Activated T-helper 2 cell treated with anti-CD3 and anti-CD28 coated beads, Interferon-gamma antibody, Interleukin-2, Interleukin-4, amounts not matched to agents 10 μg/mL and 5 μg/mL and 100 μg/mL, durations not matched to agents 14 hours and 24 hours and 36 hours (primary cell): ENCODE measurements at regions of chr12 and their contacts with region 1.

Region 1: GRCh38 chr12:12008931-12009611 is 61.7 kb upstream of the BCL2L14 start:
- DNase-seq: peak; percentile 47
- H3K4me3 Mint-ChIP-seq: peak overlapping the region; percentile 60
- H3K27ac Mint-ChIP-seq: peak overlapping the region; percentile 96
- H3K4me1 Mint-ChIP-seq: peaks cover 77% of the 10 kb centered on the region
- H3K27me3 Mint-ChIP-seq: peaks cover 5% of the 10 kb centered on the region

Region 2: DNA sequence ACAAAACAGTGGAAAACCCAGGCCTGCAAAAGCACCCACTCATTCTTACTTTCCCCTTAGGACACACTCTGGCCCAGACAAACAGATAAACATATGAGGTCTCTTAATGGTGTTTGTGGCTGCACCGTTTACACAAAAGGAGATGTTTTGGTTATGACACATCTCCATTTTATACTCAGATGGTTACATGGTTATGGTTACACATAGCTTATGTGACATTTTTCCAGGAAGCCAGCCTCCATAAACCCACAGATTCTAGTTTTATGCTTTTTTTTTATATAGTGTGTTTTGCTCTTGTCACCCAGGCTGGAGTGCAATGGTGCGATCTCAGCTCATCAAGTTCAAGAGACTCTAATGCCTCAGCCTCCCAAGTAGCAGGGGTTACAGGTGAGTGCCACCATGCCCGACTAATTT is 1704.9 kb before region 1 on chr12:
- intact Hi-C with region 1: loop called (anchors 2 kb)
- DNase-seq: peak; percentile 18
- H3K4me3 Mint-ChIP-seq: no peak overlapping the region
- H3K27ac Mint-ChIP-seq: peak overlapping the region; percentile 34
- H3K4me1 Mint-ChIP-seq: peaks cover 49% of the 10 kb centered on the region
- H3K27me3 Mint-ChIP-seq: peaks cover 7% of the 10 kb centered on the region

Region 3: DNA sequence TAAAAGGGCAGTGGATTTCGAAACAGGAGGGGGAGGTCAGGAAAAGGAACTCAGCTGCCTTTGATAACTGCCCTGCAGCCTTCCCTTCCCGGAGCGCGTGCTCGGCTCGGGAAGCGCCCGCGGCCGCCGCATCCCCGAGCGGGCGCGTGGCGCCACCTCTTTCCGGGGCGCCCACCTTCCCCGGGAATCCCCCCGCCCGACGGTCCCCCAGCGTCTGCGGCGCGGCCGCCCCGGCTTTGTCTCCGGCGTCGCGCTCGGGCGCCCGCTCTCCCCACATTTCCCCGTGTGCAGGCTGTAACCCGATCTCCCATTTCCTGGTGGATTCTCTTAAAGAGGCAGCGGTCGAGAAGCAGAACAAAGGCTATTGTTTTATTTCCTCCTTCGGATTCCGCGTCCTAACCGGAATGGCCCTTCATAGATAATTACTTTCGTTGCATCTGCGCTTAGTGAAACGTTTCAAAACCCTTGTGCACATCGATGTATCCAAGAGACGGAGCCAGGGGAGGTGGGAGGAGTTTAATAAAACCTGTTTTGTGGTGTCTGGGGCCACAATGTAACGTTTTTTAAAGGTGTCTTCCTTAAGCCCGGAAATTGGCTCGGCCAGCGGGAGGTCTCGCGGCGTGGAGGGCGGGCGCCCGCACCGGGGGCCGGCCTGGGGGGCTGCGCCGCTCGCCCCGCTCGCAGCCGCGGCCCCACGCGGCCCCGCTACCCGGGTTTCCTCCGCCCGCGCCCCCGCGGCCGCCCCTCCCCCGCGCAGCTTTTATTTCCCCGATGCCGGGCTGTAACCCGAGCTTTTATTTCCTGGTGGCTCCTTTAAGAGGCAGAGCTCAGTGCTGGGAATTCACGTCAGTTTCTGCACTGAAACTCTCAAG is 360.0 kb before region 1 on chr12 and contains the start of gene ETV6:
- intact Hi-C with region 1: loop called (anchors 1 kb)
- DNase-seq: peak; percentile 73
- H3K4me3 Mint-ChIP-seq: peak within 1 kb of the TSS; percentile 94
- H3K27ac Mint-ChIP-seq: peak within 1 kb of the TSS; percentile 99
- H3K4me1 Mint-ChIP-seq: peaks cover 28% of the 10 kb centered on the region
- H3K27me3 Mint-ChIP-seq: peaks cover 2% of the 10 kb centered on the region
- total RNA-seq, gene ETV6: 68.2 and 69.4 TPM in 2 replicates

Region 4: GRCh38 chr12:11765817-11766794 is 243.0 kb before region 1 on chr12:
- intact Hi-C with region 1: loop called (anchors 1 kb)
- DNase-seq: no peak
- H3K4me3 Mint-ChIP-seq: peak overlapping the region; percentile 63
- H3K27ac Mint-ChIP-seq: peak overlapping the region; percentile 87
- H3K4me1 Mint-ChIP-seq: peaks cover 77% of the 10 kb centered on the region
- H3K27me3 Mint-ChIP-seq: no peaks in the 10 kb centered on the region

Region 5: GRCh38 chr12:11901701-11902524 is 107.2 kb before region 1 on chr12:
- intact Hi-C with region 1: loop called (anchors 1 kb)
- DNase-seq: no peak
- H3K4me3 Mint-ChIP-seq: no peak overlapping the region
- H3K27ac Mint-ChIP-seq: peak overlapping the region; percentile 85
- H3K4me1 Mint-ChIP-seq: peaks cover 59% of the 10 kb centered on the region
- H3K27me3 Mint-ChIP-seq: no peaks in the 10 kb centered on the region

Region 6: DNA sequence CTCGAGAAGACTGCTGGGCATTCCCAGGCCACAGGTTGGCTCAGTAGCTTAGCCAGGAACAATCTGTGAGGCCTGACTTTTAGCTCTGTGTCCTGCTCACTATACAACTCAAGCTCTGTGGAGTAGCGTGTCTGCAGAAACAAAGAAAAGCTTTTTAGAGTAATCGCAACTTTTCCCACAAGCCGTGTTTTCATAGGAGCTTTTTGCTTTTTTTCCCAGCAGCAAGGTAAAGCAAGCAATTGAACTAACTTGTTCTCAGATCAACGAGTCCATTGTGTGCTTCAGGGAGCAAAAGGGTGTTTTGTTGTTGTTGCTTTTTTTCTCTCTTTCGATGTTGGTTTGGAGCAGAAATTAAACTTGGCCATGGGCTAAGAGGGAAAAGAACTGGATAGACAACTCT is 35.7 kb before region 1 on chr12:
- intact Hi-C with region 1: no loop called
- DNase-seq: no peak
- H3K4me3 Mint-ChIP-seq: no peak overlapping the region
- H3K27ac Mint-ChIP-seq: no peak overlapping the region
- H3K4me1 Mint-ChIP-seq: peaks cover 14% of the 10 kb centered on the region
- H3K27me3 Mint-ChIP-seq: peaks cover 4% of the 10 kb centered on the region

Region 7: DNA sequence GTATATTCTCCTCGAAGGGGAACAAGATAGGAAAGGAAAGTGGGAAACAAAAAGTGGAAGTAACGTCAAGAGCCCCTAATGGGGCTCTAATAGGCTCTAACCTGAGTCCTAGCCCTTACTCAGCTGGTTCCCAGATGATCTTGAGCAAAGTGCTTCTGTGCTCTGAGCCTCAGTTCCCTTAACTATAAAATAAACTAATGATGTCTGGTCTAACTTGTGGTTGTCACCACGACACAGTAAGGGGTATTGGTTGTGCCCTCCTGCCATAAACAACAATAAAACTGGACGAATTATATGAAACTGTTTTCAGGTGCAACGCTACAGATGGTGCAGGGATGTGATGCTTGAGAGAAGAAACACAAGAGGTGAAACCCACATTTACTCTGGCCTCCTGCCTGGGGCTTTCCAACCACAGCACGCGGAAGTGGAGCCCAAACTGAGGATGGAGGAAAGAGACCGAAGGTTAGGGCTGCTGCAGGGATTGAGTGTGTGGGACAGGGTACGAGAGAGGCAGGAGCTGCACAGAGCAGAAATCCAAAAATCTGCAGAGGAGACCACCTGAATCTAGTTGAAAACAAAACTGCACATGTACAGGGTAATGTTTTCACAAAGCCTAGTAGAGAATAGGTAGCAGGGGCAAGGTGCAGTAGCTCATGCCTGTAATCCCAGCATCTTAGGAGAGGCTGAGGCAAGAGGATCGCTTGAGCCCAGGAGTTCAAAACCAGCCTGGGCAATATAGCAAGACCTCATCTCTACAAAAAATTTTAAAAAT is 16.0 kb after region 1 on chr12:
- intact Hi-C with region 1: loop called (anchors 2 kb)
- DNase-seq: no peak
- H3K4me3 Mint-ChIP-seq: no peak overlapping the region
- H3K27ac Mint-ChIP-seq: peak overlapping the region; percentile 38
- H3K4me1 Mint-ChIP-seq: peaks cover 37% of the 10 kb centered on the region
- H3K27me3 Mint-ChIP-seq: peaks cover 2% of the 10 kb centered on the region

Region 8: DNA sequence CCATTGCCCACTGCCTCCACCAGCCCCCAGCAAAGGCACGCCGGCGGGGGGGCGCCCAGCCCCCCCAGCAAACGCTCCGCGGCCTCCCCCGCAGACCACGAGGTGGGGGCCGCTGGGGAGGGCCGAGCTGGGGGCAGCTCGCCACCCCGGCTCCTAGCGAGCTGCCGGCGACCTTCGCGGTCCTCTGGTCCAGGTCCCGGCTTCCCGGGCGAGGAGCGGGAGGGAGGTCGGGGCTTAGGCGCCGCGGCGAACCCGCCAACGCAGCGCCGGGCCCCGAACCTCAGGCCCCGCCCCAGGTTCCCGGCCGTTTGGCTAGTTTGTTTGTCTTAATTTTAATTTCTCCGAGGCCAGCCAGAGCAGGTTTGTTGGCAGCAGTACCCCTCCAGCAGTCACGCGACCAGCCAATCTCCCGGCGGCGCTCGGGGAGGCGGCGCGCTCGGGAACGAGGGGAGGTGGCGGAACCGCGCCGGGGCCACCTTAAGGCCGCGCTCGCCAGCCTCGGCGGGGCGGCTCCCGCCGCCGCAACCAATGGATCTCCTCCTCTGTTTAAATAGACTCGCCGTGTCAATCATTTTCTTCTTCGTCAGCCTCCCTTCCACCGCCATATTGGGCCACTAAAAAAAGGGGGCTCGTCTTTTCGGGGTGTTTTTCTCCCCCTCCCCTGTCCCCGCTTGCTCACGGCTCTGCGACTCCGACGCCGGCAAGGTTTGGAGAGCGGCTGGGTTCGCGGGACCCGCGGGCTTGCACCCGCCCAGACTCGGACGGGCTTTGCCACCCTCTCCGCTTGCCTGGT is 707.9 kb after region 1 on chr12 and contains the start of gene CDKN1B:
- intact Hi-C with region 1: loop called (anchors 5 kb)
- DNase-seq: peak; percentile 80
- H3K4me3 Mint-ChIP-seq: peak within 1 kb of the TSS; percentile 99
- H3K27ac Mint-ChIP-seq: peak within 1 kb of the TSS; percentile 98
- H3K4me1 Mint-ChIP-seq: peaks cover 52% of the 10 kb centered on the region
- H3K27me3 Mint-ChIP-seq: no peaks in the 10 kb centered on the region
- total RNA-seq, gene CDKN1B: 49.0 and 53.4 TPM in 2 replicates